ENCODE measurements at regions of chr21 and their contacts with region 1.

Region 1: GRCh38 chr21:25607151-25608043 is at the start of gene MRPL39:
- DNase-seq: peak; percentile 93
- H3K4me3 Mint-ChIP-seq: peak within 1 kb of the TSS; percentile 94
- H3K27ac Mint-ChIP-seq: peak within 1 kb of the TSS; percentile 95
- H3K4me1 Mint-ChIP-seq: peaks cover 35% of the 10 kb centered on the region
- H3K27me3 Mint-ChIP-seq: no peaks in the 10 kb centered on the region
- total RNA-seq, gene MRPL39: 71.4 to 75.8 TPM

Region 2: DNA sequence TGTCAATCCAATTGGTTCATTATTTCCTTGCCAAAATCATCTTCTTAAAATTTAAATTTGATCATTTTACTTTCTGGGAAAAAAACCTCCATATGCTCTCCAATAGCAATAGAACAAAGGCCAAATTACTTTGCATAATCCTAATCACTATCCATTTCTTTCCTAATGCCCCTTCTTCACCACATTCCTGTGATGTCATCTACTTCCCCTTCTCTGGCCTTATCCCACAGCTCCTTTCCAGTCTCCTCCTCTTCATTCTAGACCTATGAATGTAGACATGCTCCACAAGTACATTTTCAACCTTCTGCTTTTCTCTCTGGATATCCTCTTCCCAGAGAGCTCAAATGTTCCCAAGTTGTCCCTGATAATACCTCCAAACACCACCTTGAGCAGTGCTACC is 216.7 kb before region 1 on chr21:
- CTCF ChIA-PET with region 1: no interaction called
- intact Hi-C with region 1: no loop called
- DNase-seq: no peak
- H3K4me3 Mint-ChIP-seq: no peak overlapping the region
- H3K27ac Mint-ChIP-seq: no peak overlapping the region
- H3K4me1 Mint-ChIP-seq: peaks cover 7% of the 10 kb centered on the region
- H3K27me3 Mint-ChIP-seq: peaks cover 6% of the 10 kb centered on the region

Region 3: GRCh38 chr21:25421327-25422028 is 185.9 kb before region 1 on chr21:
- CTCF ChIA-PET with region 1: interaction called, 5 read pairs
- intact Hi-C with region 1: loop called (anchors 1 kb)
- DNase-seq: peak; percentile 86
- H3K4me3 Mint-ChIP-seq: peak overlapping the region; percentile 59
- H3K27ac Mint-ChIP-seq: peak overlapping the region; percentile 92
- H3K4me1 Mint-ChIP-seq: peaks cover 65% of the 10 kb centered on the region
- H3K27me3 Mint-ChIP-seq: no peaks in the 10 kb centered on the region

Region 4: GRCh38 chr21:25639551-25640201 is 32.3 kb after region 1 on chr21:
- CTCF ChIA-PET with region 1: interaction called, 22 read pairs
- intact Hi-C with region 1: loop called (anchors 1 kb)
- DNase-seq: peak; percentile 57
- H3K4me3 Mint-ChIP-seq: peak overlapping the region; percentile 67
- H3K27ac Mint-ChIP-seq: no peak overlapping the region
- H3K4me1 Mint-ChIP-seq: peaks cover 20% of the 10 kb centered on the region
- H3K27me3 Mint-ChIP-seq: peaks cover 31% of the 10 kb centered on the region

Region 5: DNA sequence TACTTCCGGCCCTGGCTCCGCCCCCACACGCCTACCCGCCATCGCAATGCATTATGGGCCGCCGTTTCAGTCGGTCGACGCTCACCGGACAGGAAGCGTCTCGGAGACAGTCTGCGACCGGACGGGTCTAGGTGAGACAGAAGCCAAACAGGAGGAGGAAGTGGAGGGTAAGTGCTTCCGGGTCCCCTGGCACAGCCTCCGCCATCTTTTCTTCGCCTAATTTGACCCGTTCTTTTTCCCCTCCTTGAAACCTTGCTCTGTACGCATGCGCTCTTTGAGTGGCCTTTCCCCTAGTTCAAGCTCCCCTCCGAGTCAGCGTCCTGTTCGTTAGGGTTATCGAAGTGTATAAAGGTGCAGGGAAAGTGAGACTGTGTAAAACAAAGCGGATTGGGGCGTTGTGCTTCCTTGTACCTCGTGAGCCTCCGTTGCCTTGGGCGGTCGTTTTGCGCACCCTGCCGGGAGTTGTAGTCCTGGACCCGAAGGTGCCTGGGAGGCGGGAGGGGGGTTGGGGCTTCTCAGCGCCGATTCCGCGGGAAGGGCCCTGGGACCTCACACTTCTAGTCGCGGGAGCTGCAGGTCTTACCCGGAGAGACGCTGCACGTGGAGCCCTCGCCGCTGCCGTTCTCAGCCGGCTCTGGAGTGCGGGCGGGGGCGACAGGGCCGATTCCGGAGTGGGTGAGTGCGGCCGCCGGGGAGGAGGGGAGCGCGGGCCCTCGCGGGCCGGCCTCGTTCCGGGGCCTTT is 127.7 kb after region 1 on chr21 and contains the starts of genes ATP5PF and GABPA:
- CTCF ChIA-PET with region 1: interaction called, 26 read pairs
- intact Hi-C with region 1: loop called (anchors 1 kb)
- DNase-seq: peak; percentile 99
- H3K4me3 Mint-ChIP-seq: peak within 1 kb of the TSS; percentile 94
- H3K27ac Mint-ChIP-seq: peak within 1 kb of the TSS; percentile 99
- H3K4me1 Mint-ChIP-seq: peaks cover 48% of the 10 kb centered on the region
- H3K27me3 Mint-ChIP-seq: no peaks in the 10 kb centered on the region
- total RNA-seq, gene ATP5PF: 124 to 132 TPM
- total RNA-seq, gene GABPA: 18.5 to 21.2 TPM

Region 6: GRCh38 chr21:25809013-25809412 is 201.6 kb after region 1 on chr21:
- CTCF ChIA-PET with region 1: interaction called, 4 read pairs
- intact Hi-C with region 1: loop called (anchors 2 kb)
- DNase-seq: peak; percentile 45
- H3K4me3 Mint-ChIP-seq: no peak overlapping the region
- H3K27ac Mint-ChIP-seq: no peak overlapping the region
- H3K4me1 Mint-ChIP-seq: peaks cover 14% of the 10 kb centered on the region
- H3K27me3 Mint-ChIP-seq: peaks cover 4% of the 10 kb centered on the region

Region 7: GRCh38 chr21:26077521-26077920 is 470.1 kb after region 1 on chr21:
- CTCF ChIA-PET with region 1: no interaction called
- intact Hi-C with region 1: no loop called
- DNase-seq: no peak
- H3K4me3 Mint-ChIP-seq: no peak overlapping the region
- H3K27ac Mint-ChIP-seq: no peak overlapping the region
- H3K4me1 Mint-ChIP-seq: no peaks in the 10 kb centered on the region
- H3K27me3 Mint-ChIP-seq: no peaks in the 10 kb centered on the region

Region 8: DNA sequence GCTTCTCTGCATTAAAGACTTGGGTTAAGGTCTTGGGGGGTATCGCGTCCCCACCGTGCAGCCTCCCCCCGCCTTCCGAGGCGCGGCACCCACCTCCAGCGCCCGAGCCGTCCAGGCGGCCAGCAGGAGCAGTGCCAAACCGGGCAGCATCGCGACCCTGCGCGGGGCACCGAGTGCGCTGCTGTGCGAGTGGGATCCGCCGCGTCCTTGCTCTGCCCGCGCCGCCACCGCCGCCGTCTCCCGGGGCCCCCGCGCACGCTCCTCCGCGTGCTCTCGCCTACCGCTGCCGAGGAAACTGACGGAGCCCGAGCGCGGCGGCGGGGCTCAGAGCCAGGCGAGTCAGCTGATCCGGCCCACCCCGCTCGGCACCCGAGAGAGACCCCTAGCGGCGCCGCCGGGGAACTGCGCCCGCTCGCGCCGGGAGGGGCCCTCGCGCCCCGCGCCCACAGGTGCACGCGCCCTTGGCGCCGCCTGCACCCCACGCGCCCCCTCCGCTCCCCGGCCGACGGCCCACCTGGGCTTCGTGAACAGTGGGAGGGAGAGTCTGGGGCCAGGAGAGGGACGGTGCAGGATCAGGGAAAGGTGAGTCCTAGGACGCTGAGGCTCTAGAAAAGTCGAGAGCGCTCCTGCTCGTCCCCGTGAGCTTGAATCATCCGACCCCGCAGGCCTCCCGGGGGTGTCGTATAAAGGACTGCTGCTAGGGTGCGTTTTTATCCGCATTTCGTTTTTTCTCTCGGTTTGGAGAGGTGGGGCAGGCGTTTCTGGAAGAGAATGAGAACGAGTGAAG is 563.3 kb after region 1 on chr21 and contains the start of gene APP:
- CTCF ChIA-PET with region 1: interaction called, 4 read pairs
- intact Hi-C with region 1: loop called (anchors 1 kb)
- DNase-seq: peak; percentile 87
- H3K4me3 Mint-ChIP-seq: peak within 1 kb of the TSS; percentile 90
- H3K27ac Mint-ChIP-seq: peak within 1 kb of the TSS; percentile 66
- H3K4me1 Mint-ChIP-seq: peaks cover 21% of the 10 kb centered on the region
- H3K27me3 Mint-ChIP-seq: no peaks in the 10 kb centered on the region
- total RNA-seq, gene APP: 60.6 to 61.1 TPM

Measured in activated naive CD4-positive, alpha-beta T cell treated with anti-CD3 and anti-CD28 coated beads for 36 hours (primary cell).